ENCODE measurements at regions of chr7 and their contacts with region 1.

Region 1: GRCh38 chr7:88243345-88243909 is 23.6 kb upstream of the SRI start:
- DNase-seq: peak; percentile 45
- H3K27ac ChIP-seq: no peak overlapping the region
- CTCF ChIP-seq: peak; percentile 89

Region 2: GRCh38 chr7:88357781-88358525 is 114.5 kb after region 1 on chr7:
- CTCF ChIA-PET with region 1: interaction called, 23 read pairs
- POLR2A ChIA-PET with region 1: no interaction called
- DNase-seq: peak; percentile 33
- H3K27ac ChIP-seq: no peak overlapping the region
- CTCF ChIP-seq: peak; percentile 83

Measured in RWPE1 (cell line).